Common myeloid progenitor, CD34-positive (primary cell): ENCODE measurements at regions of chr1 and their contacts with region 1.

Region 1: GRCh38 chr1:3170561-3171453 is 101.8 kb downstream of the PRDM16 start:
- DNase-seq: peak; percentile 61 to 91 (median 87)
- H3K4me3 ChIP-seq: peak overlapping the region in 6 of 7 experiments; percentile 32 to 72 (median 48)
- H3K27ac ChIP-seq: peak overlapping the region; percentile 40 to 68
- H3K4me1 ChIP-seq: peaks cover 0 to 77% (median 73%) of the 10 kb centered on the region in 4 experiments
- H3K27me3 ChIP-seq: no peaks in the 10 kb centered on the region

Region 2: GRCh38 chr1:3060601-3061551 is 109.9 kb before region 1 on chr1:
- CTCF ChIA-PET with region 1: no interaction called
- POLR2A ChIA-PET with region 1: no interaction called
- DNase-seq: no peak
- H3K4me3 ChIP-seq: no peak overlapping the region
- H3K27ac ChIP-seq: no peak overlapping the region
- H3K4me1 ChIP-seq: no peaks in the 10 kb centered on the region
- H3K27me3 ChIP-seq: no peaks in the 10 kb centered on the region

Region 3: GRCh38 chr1:3181956-3182355 is 11.1 kb after region 1 on chr1:
- CTCF ChIA-PET with region 1: interaction called, 3 read pairs
- POLR2A ChIA-PET with region 1: interaction called, 10 read pairs
- DNase-seq: peak; percentile 79 to 95 (median 94)
- H3K4me3 ChIP-seq: peak overlapping the region in 3 of 7 experiments; percentile 21 to 59 (median 52)
- H3K27ac ChIP-seq: peak overlapping the region; percentile 75 to 77
- H3K4me1 ChIP-seq: peaks cover 0 to 55% (median 46%) of the 10 kb centered on the region in 4 experiments
- H3K27me3 ChIP-seq: no peaks in the 10 kb centered on the region

Region 4: GRCh38 chr1:3410142-3410925 is 239.5 kb after region 1 on chr1:
- CTCF ChIA-PET with region 1: no interaction called
- POLR2A ChIA-PET with region 1: no interaction called
- DNase-seq: peak in 2 of 3 donors; percentile 30 to 53
- H3K4me3 ChIP-seq: no peak overlapping the region
- H3K27ac ChIP-seq: no peak overlapping the region
- H3K4me1 ChIP-seq: no peaks in the 10 kb centered on the region
- H3K27me3 ChIP-seq: no peaks in the 10 kb centered on the region